Activated naive CD4-positive, alpha-beta T cell treated with anti-CD3 and anti-CD28 coated beads for 36 hours (primary cell): ENCODE measurements at regions of chr1 and their contacts with region 1.

Region 1: DNA sequence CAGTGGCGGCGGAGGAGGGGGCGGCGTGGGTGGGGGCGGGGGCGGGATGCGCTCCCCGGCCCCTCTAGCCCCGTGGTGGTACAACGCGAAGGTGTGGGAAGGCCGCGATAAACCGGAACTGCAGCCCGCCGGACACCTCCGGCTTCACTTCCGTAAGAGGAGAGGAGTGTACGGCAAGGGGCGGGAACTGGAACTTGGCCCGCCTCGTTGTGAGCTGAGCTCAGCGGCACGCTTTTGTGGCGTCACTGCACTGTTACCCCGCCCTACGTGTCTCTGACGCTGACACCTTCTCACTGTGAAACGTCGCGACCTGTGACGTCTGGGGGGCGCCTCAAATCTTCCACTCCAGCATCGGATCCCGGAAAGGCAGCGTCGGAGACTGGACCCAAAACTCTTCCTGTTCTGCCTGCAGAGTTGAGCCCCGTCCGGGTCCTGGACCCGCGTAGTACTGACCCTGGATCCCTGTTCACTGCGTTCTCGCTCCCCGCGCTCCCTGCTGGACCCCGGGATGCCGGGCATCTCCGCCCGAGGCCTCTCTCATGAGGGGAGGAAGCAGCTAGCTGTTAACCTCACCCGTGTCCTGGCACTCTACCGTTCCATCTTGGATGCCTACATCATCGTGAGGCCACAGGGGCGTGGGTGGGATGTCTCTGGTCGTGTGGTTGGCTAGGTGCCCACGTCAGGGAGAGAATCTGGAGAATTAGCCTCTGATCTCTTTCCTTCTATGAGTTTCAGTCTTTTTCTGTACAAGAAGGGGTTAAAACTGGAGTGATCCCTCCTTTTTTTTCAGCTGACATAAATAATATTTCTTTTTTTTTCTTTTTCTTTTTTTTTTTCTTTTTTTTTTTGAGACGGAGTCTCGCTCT is at the start of gene ISG20L2:
- DNase-seq: peak; percentile 99
- H3K4me3 Mint-ChIP-seq: no peak within 1 kb of the TSS
- H3K27ac Mint-ChIP-seq: peak within 1 kb of the TSS; percentile 98
- H3K4me1 Mint-ChIP-seq: peaks cover 27% of the 10 kb centered on the region
- H3K27me3 Mint-ChIP-seq: no peaks in the 10 kb centered on the region
- total RNA-seq, gene ISG20L2: 24.8 to 28.7 TPM

Region 2: GRCh38 chr1:156146020-156146768 is 582.6 kb before region 1 on chr1:
- CTCF ChIA-PET with region 1: no interaction called
- intact Hi-C with region 1: no loop called
- DNase-seq: peak; percentile 63
- H3K4me3 Mint-ChIP-seq: peak overlapping the region; percentile 67
- H3K27ac Mint-ChIP-seq: peak overlapping the region; percentile 85
- H3K4me1 Mint-ChIP-seq: peaks cover 49% of the 10 kb centered on the region
- H3K27me3 Mint-ChIP-seq: no peaks in the 10 kb centered on the region

Region 3: GRCh38 chr1:156659994-156660751 is 68.7 kb before region 1 on chr1:
- CTCF ChIA-PET with region 1: interaction called, 14 read pairs
- intact Hi-C with region 1: loop called (anchors 1 kb)
- DNase-seq: peak; percentile 96
- H3K4me3 Mint-ChIP-seq: peak overlapping the region; percentile 83
- H3K27ac Mint-ChIP-seq: peak overlapping the region; percentile 19
- H3K4me1 Mint-ChIP-seq: peaks cover 46% of the 10 kb centered on the region
- H3K27me3 Mint-ChIP-seq: peaks cover 29% of the 10 kb centered on the region

Region 4: DNA sequence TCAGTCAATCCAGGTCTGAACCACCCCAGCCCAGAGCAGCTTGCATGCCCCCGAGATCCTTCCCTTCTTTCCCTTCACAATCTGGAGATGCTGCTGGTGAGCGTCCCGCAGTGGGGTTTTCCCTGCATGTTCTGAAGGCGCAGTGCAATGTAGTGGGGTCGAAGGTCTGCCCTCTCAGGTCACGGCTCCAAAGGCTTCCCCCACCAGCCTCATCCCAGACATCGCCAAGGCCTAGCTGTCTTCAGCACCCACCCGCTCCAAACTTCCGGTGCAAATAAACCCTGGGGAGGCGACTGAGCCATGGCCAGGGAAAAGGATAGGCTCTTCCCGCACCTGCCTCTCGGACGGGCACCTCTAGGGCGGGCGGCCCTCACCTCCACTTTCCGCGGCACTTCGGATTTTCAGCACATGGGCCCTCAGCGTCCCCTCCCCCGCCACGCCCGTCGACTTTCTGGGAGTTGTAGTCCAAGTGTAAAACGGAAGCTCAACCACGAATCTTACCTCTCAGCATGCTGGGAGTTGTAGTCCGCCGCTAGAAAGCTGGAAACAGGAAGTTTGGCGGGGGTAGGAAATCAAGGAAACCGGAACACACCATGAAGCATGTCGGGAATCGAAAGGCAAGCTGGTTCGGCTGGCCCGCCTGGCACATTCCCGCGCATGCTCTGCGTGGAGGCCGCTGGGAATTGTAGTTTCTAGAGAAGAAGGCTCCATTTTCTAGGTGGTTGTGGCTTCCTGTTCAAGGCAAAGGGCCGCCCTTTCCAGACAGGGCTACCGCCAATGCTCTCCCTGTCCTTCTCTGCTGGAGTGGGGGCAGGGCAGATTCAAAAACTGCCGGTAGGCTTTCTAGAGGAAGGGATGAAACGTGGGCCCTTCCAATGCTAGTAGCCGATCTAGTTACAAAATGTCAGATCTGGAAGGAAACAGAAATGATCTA is 12.1 kb after region 1 on chr1 and contains the start of gene MRPL24:
- CTCF ChIA-PET with region 1: interaction called, 17 read pairs
- intact Hi-C with region 1: loop called (anchors 1 kb)
- DNase-seq: peak; percentile 99
- H3K4me3 Mint-ChIP-seq: peak within 1 kb of the TSS; percentile 98
- H3K27ac Mint-ChIP-seq: peak within 1 kb of the TSS; percentile 98
- H3K4me1 Mint-ChIP-seq: peaks cover 40% of the 10 kb centered on the region
- H3K27me3 Mint-ChIP-seq: no peaks in the 10 kb centered on the region
- total RNA-seq, gene MRPL24: 91.1 to 114 TPM

Region 5: GRCh38 chr1:156775799-156776198 is 47.0 kb after region 1 on chr1:
- CTCF ChIA-PET with region 1: interaction called, 124 read pairs
- intact Hi-C with region 1: no loop called
- DNase-seq: peak; percentile 21
- H3K4me3 Mint-ChIP-seq: no peak overlapping the region
- H3K27ac Mint-ChIP-seq: no peak overlapping the region
- H3K4me1 Mint-ChIP-seq: peaks cover 55% of the 10 kb centered on the region
- H3K27me3 Mint-ChIP-seq: no peaks in the 10 kb centered on the region

Region 6: GRCh38 chr1:156813750-156814570 is 85.1 kb after region 1 on chr1:
- CTCF ChIA-PET with region 1: interaction called, 4 read pairs
- intact Hi-C with region 1: loop called (anchors 1 kb)
- DNase-seq: peak; percentile 77
- H3K4me3 Mint-ChIP-seq: peak overlapping the region; percentile 93
- H3K27ac Mint-ChIP-seq: peak overlapping the region; percentile 100
- H3K4me1 Mint-ChIP-seq: peaks cover 62% of the 10 kb centered on the region
- H3K27me3 Mint-ChIP-seq: no peaks in the 10 kb centered on the region

Region 7: DNA sequence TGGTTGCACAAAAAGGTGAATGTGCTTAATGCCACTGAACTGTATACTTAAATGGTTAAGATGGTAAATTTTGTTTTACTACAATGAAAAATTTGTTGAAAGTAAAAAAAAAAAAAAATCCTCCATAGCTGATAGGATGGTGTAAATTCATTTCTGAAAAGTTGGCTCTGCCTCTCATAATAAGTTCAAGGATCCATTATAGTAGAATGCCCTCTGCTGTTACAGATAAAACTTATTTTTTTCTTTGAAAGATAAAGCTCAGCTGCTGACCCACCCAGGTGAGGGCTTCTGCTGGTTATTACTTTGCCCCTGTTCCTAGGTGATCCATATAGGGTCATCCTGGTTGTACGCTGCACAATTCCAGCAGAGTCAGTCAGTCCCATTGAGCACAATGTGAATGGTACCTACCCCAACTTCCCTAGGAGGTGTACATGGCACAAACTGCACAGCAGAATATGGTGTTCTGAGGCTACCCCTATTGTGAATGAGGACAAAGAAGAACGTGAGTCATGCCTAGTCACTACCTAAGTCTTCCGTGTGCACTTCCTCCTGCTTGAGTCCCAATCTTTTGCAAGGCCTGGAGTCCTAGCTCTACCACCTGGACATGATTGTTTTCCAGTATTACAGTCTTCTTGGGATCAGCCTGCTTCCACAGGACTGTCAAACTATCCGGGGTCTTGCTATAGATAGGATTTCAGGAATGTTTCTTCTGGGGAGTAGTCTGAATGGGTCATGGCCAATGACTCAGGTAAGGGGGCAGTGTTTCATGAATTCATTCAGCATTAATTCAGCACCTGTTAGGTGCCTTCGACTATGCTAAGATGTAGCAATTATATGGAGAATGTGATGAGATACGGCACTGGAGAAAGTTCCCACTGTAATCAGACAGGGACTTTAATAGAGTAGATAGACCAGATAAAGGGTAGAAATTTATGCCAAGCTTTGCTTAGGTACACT is 1133.6 kb after region 1 on chr1:
- CTCF ChIA-PET with region 1: no interaction called
- intact Hi-C with region 1: no loop called
- DNase-seq: no peak
- H3K4me3 Mint-ChIP-seq: no peak overlapping the region
- H3K27ac Mint-ChIP-seq: no peak overlapping the region
- H3K4me1 Mint-ChIP-seq: no peaks in the 10 kb centered on the region
- H3K27me3 Mint-ChIP-seq: peaks cover 2% of the 10 kb centered on the region